Activated CD8-positive, alpha-beta T cell treated with anti-CD3 and anti-CD28 coated beads, Interleukin-2, amount 10 ng/mL, durations not matched to agents 7 days and 5 days (primary cell): ENCODE measurements at regions of chr6 and their contacts with region 1.

Region 1: DNA sequence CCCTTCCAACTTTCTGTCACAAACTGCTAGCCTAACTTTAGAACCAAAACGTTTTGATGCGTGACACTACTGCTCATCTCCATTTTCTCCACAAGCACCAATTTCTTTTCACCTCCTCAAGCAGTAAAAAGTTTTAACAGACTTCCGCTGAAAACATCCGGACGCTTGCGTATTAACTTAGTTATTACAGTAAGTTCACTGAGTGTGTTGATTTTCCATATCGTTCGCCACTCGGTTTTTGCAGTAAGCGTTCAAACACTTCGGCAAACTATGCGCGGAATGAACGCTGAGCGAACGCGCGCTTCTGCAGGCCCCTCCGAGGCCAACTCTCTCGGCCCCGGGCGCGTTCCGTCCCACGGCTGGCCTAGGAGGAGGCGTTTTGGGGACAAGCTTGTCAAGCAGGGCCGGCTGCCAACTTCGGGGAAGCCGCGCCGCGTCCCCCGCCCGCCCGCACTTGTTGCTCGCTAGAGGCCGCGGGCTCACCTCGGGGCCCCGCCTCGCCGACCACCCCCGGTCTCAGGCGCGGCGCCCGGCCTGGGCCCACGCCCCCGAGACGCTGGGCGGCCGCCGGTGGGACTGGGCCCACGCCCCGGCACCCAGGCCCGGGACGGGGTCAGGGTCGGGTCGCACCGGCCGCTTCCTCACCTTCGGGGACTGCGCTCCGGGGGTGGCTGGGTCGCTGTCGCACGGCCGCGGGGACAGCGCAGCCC is 945 bp downstream of the PHF10 start:
- DNase-seq: peak; percentile 66
- ATAC-seq: peak; percentile 50
- H3K4me3 Mint-ChIP-seq: peak overlapping the region; percentile 86
- H3K27ac Mint-ChIP-seq: peak overlapping the region; percentile 93
- H3K4me1 Mint-ChIP-seq: peaks cover 39% of the 10 kb centered on the region
- H3K27me3 Mint-ChIP-seq: peaks cover 6% of the 10 kb centered on the region

Region 2: DNA sequence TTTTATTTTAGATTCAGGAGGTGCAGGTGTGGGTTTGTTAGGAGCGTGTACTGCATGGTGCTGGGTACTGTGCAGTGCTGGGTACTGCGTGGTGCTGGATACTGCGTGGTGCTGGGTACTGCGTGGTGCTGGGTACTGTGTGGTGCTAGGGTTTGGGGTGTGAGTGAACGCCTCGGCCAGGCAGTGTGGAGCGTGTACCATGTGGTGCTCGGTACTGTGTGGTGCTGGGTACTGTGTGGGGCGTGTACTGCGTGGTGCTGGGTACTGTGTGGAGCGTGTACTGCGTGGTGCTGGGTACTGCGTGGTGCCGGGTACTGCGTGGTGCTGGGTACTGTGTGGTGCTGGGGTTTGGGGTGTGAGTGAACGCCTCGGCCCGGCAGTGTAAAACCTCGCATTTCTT is 84.4 kb before region 1 on chr6:
- CTCF ChIA-PET with region 1: no interaction called
- POLR2A ChIA-PET with region 1: no interaction called
- DNase-seq: no peak
- ATAC-seq: no peak
- H3K4me3 Mint-ChIP-seq: no peak overlapping the region
- H3K27ac Mint-ChIP-seq: no peak overlapping the region
- H3K4me1 Mint-ChIP-seq: no peaks in the 10 kb centered on the region
- H3K27me3 Mint-ChIP-seq: no peaks in the 10 kb centered on the region

Region 3: GRCh38 chr6:169689247-169689646 is 34.1 kb before region 1 on chr6:
- CTCF ChIA-PET with region 1: no interaction called
- POLR2A ChIA-PET with region 1: no interaction called
- DNase-seq: no peak
- ATAC-seq: no peak
- H3K4me3 Mint-ChIP-seq: no peak overlapping the region
- H3K27ac Mint-ChIP-seq: no peak overlapping the region
- H3K4me1 Mint-ChIP-seq: no peaks in the 10 kb centered on the region
- H3K27me3 Mint-ChIP-seq: no peaks in the 10 kb centered on the region

Region 4: DNA sequence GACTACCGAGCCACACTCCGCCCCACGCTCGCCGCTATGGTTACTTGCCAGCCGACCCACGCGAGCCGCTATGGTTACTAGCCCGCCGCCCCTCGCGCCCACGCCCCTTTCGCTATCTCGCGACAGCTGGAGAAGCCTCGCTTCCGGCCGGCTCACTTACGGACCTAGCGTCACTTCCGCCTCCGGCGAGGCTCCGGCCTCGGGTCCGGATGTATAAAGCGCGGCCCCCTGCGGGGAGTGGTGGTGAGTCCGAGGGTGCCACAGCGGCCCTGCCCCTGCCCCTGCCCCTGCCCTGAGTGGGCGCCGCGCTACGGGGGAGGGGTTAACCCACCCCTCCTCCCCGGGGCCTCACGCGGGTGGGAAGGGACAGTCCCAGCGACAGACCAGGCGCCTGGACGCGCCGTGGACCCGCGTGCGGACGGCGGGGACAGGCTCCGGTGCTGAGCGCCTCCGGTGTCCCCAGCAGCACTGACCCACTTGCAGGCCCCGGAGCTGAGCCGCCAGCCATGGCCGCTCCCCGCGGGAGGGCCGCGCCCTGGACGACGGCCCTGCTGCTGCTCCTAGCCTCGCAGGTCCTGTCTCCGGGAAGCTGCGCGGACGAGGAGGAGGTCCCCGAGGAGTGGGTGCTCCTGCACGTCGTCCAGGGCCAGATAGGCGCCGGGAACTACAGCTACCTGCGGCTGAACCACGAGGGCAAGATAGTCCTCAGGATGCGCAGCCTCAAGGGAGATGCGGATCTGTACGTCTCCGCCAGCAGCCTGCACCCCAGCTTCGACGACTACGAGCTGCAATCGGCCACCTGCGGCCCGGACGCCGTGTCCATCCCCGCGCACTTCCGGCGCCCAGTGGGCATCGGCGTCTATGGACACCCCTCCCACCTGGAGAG is 21.2 kb before region 1 on chr6 and contains the starts of genes C6orf120 and WDR27:
- CTCF ChIA-PET with region 1: interaction called, 19 read pairs
- POLR2A ChIA-PET with region 1: interaction called, 47 read pairs
- DNase-seq: peak; percentile 97
- ATAC-seq: peak; percentile 91
- H3K4me3 Mint-ChIP-seq: peak within 1 kb of the TSS; percentile 90
- H3K27ac Mint-ChIP-seq: peak within 1 kb of the TSS; percentile 92
- H3K4me1 Mint-ChIP-seq: peaks cover 52% of the 10 kb centered on the region
- H3K27me3 Mint-ChIP-seq: no peaks in the 10 kb centered on the region
- total RNA-seq, gene C6orf120: 17.4 to 18.3 TPM
- total RNA-seq, gene WDR27: 22.9 to 25.3 TPM